Activated B cell treated with CpG ODN at 0.5 μM for 24 hours (primary cell): ENCODE measurements at regions of chr15 and their contacts with region 1.

Region 1: DNA sequence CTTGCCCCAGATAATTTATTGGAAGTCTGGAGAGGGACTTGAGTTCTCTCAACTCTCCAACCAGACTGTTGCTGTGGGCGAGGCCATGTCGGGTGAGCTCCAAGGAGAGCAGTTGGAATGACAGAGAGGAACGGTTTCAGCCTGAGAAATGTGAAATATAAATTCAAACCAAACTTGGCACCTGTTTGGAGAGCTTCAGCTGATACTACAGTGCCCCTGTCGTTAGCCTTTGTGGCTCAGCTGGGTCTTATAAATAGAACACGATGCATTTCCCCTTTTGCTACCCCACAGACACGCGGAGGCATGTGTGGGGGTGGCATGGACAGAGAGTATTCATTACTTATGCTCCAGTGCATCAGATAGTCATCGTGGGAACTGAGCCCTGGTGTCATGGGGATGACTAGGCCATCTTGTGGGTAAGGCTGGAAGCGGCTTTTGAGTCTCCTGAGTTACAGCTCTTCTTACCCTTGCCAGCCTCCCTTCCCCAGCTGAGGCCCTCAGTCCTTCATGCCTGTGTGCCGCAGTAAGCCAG is 15.6 kb downstream of the SMAD3 start:
- DNase-seq: peak; percentile 69
- ATAC-seq: peak; percentile 70
- H3K4me3 Mint-ChIP-seq: peak overlapping the region; percentile 76
- H3K27ac Mint-ChIP-seq: peak overlapping the region; percentile 95
- H3K4me1 Mint-ChIP-seq: peaks cover 99% of the 10 kb centered on the region
- H3K27me3 Mint-ChIP-seq: no peaks in the 10 kb centered on the region
- CTCF ChIP-seq: no peak

Region 2: GRCh38 chr15:66805202-66805885 is 275.6 kb before region 1 on chr15:
- CTCF ChIA-PET with region 1: no interaction called
- POLR2A ChIA-PET with region 1: no interaction called
- intact Hi-C with region 1: no loop called
- DNase-seq: no peak
- ATAC-seq: no peak
- H3K4me3 Mint-ChIP-seq: no peak overlapping the region
- H3K27ac Mint-ChIP-seq: no peak overlapping the region
- H3K4me1 Mint-ChIP-seq: no peaks in the 10 kb centered on the region
- H3K27me3 Mint-ChIP-seq: peaks cover 3% of the 10 kb centered on the region
- CTCF ChIP-seq: no peak

Region 3: DNA sequence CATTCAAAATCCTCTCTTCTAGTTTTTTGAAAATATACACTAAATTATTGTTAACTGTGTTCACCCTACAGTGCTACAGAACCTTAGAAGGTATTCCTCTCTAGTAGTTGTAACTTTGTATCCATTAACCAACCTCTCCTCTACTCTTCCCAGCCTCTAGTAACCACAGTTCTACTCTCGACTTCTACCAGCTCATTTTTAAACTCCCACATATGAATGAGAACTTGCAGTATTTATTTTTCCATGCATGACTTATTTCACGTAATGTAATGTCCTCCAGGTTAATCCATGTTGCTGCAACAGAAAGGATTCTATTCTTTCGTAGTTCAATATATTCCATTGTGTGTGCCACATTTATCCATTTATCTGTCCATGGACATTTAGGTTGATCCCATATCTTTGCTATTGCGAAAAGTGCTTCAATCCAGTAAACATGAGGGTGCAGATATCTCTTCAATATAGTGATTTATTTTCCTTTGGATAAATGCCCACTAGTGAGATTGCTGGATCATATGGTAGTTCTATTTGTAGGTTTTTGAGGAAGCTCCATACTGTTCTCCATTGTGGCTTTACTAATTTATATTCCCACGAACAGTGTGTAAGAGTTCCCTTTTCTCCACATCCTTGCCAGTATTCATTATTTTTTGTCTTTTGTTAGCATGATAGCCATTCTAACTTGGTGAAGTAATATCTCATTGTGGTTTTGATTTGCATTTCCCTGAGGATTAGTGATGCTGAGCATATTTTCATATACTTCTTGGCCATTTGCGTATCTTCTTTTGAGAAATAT is 129.2 kb before region 1 on chr15:
- CTCF ChIA-PET with region 1: interaction called, 28 read pairs
- POLR2A ChIA-PET with region 1: interaction called, 21 read pairs
- intact Hi-C with region 1: loop called (anchors 1 kb)
- DNase-seq: no peak
- ATAC-seq: peak; percentile 42
- H3K4me3 Mint-ChIP-seq: no peak overlapping the region
- H3K27ac Mint-ChIP-seq: no peak overlapping the region
- H3K4me1 Mint-ChIP-seq: peaks cover 20% of the 10 kb centered on the region
- H3K27me3 Mint-ChIP-seq: peaks cover 22% of the 10 kb centered on the region
- CTCF ChIP-seq: no peak

Region 4: DNA sequence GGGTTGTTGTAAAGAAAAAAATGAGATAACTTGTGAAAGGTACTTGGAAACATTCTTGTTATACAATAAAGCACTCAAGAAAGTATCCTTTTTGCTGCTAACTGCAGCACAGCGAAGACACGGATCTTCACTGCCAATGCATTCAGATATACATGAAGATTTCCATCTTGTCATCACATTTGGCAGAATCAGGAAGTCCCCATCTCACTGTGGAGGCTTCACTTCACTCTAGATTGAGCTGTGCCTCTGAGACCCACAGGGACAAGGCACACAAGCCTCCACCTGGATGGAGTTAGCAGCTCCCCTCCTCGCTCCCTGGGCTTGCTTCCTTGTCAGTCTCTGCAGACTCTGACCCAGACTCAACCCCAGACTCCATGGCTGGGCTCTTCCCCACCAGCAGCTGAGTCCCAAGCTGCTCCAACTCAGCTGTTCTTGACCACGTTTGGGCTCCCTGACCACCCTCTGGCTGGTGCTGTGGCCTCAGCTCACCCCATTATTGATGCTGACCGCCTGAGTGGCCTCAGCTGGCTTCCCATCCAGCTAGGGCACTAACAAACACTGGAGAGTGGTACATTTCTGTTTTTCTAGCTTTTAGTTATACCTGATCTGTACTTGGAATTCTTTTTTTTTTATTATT is 61.0 kb before region 1 on chr15:
- CTCF ChIA-PET with region 1: no interaction called
- POLR2A ChIA-PET with region 1: no interaction called
- intact Hi-C with region 1: no loop called
- DNase-seq: no peak
- ATAC-seq: no peak
- H3K4me3 Mint-ChIP-seq: no peak overlapping the region
- H3K27ac Mint-ChIP-seq: no peak overlapping the region
- H3K4me1 Mint-ChIP-seq: peaks cover 3% of the 10 kb centered on the region
- H3K27me3 Mint-ChIP-seq: no peaks in the 10 kb centered on the region
- CTCF ChIP-seq: no peak

Region 5: DNA sequence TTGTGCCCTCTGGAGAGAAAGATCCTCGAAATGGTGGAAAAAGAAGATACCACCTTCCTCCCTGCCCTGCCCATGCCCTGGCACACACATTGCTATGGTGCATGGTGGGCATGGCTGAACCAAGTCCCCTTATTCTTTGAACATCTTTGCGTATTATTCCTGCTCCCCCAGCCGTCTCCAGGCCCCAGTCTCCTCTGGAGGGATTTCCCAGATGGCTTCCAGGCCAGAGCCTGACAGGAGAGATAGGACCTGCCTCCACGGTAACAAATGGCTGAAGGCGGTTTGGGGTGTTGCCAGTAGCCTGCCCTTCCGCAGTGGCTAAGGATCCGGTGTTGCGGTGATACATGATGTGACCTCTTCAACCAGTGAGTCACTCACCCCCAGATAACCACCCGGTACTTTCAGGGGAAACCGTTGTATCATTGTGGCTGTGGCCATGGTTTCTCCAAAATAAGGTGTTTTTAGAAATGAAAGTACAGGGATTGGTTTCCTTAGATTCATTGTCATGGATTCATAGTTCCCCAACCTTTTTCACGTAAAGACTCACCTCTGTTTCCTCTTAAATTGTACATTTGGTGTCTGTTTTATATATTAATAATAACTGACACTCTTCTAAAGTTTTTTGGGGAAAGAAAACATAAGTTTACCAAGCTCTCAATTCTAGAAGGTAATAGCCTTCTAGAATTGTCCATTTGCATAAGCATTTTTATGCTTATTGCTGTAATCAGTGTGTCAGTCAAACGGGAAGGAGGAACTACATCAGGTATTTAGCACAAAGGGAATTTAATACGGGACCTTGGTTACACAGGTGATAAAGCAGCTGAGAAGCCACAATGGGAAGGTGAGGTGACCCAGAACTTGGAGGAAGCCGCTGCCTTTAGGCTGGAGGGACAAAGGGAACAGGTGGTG is 10.4 kb after region 1 on chr15:
- CTCF ChIA-PET with region 1: interaction called, 70 read pairs
- POLR2A ChIA-PET with region 1: interaction called, 427 read pairs
- intact Hi-C with region 1: loop called (anchors 1 kb)
- DNase-seq: no peak
- ATAC-seq: peak; percentile 46
- H3K4me3 Mint-ChIP-seq: peak overlapping the region; percentile 74
- H3K27ac Mint-ChIP-seq: peak overlapping the region; percentile 95
- H3K4me1 Mint-ChIP-seq: peaks cover 100% of the 10 kb centered on the region
- H3K27me3 Mint-ChIP-seq: no peaks in the 10 kb centered on the region
- CTCF ChIP-seq: no peak

Region 6: GRCh38 chr15:67120839-67121643 is 40.1 kb after region 1 on chr15:
- CTCF ChIA-PET with region 1: interaction called, 7 read pairs
- POLR2A ChIA-PET with region 1: interaction called, 1,703 read pairs
- intact Hi-C with region 1: loop called (anchors 1 kb)
- DNase-seq: peak; percentile 86
- ATAC-seq: peak; percentile 86
- H3K4me3 Mint-ChIP-seq: peak overlapping the region; percentile 74
- H3K27ac Mint-ChIP-seq: peak overlapping the region; percentile 94
- H3K4me1 Mint-ChIP-seq: peaks cover 97% of the 10 kb centered on the region
- H3K27me3 Mint-ChIP-seq: no peaks in the 10 kb centered on the region
- CTCF ChIP-seq: no peak

Region 7: DNA sequence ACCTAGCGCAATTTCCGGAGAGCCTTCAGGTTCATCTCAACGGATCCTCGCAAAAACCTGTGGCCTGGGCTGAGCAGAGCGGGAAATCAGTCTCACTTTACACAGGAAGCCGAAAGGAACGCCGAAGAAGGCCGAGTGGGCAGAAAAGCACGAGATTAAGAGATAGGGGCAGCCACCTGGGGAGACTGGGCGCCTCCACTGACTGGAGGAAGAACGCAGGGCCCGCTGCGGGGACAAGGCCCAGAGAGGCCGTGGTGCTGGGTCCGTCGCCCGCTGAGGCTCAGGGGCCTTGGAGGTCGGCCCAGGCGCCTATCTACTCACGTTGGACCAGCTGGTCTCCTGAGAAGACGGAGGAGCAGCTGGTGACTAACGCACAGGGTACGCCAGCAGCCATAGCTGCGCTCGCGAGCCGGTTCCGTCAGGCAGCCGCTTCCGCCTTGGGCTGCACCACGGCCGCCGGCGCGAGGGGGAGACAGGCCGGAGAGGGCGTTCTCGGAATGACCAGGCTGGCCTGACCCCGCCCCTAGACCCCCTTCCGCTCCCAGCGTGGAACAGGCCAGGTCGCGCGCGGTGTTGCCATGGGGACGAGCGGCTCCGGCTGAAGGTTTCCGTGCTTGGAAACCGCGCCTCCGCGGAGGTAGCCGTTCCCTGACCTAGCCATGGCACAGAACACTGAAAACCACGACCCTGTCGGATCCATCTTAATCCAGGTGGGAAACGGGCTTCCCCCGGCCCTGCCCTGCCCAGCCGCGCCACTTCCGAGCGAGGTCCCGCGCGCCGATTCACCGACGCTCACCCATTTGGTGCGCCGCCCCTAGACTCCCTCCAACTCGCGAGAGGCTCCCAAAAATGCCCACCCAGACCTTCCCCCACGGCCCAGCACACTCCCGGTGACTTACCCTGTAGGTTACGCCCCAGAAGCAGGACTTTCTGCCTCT is 173.5 kb after region 1 on chr15 and contains the starts of genes AAGAB and IQCH:
- CTCF ChIA-PET with region 1: no interaction called
- POLR2A ChIA-PET with region 1: interaction called, 5 read pairs
- intact Hi-C with region 1: loop called (anchors 2 kb)
- DNase-seq: peak; percentile 100
- ATAC-seq: peak; percentile 96
- H3K4me3 Mint-ChIP-seq: peak within 1 kb of the TSS; percentile 99
- H3K27ac Mint-ChIP-seq: peak within 1 kb of the TSS; percentile 95
- H3K4me1 Mint-ChIP-seq: peaks cover 26% of the 10 kb centered on the region
- H3K27me3 Mint-ChIP-seq: no peaks in the 10 kb centered on the region
- CTCF ChIP-seq: no peak
- total RNA-seq, gene AAGAB: 48.5 and 50.8 TPM in 2 replicates
- total RNA-seq, gene IQCH: 1.1 and 1.5 TPM in 2 replicates